MCF 10A (cell line): ENCODE measurements at regions of chr6 and their contacts with region 1.

Region 1: DNA sequence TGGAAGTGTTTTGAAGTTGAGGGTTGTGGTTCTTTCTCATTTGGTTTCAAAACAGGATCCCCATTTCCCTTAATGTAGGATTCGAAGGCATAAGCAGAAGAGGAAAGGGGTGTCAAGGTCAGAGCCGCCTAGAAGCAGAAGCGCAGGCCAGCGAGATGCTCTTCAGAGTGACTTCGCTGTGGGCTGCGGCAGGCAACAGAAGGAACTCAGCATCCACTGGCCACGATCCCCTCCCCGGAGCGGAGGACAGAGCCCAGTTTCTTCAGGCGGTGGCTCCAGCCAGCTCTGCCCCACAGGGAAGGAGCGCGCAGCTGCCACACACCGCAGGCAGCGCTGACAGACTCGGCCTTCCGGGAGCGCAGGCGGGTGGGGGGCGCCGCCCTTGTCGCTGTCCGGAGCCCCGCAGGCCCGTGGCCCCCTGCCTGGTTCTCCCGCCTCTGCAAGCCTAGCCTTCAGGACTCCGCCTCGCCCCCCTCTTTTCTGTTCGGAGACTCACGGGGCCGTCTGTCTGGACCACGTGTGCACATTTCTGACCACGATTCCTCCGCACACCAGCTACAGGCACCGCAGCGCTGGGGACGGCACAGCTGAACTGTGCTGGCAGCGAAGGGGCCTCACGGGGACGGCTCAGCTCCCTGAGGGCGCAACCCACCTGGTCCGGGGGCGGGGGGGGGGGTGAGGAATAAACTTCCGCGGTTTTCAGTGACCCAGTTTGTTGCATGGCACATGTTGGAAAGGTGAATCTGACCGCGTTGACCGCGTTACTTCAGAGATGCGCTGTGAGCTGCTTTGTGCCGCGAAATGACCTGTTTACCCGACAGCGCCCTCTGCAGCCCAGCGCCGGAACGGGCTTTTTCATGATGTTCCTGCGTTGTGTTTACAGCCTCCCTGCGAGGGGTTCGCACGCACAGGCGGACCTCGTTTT is 26.1 kb downstream of the TTLL2 start:
- DNase-seq: peak; percentile 36
- H3K4me3 Mint-ChIP-seq: peak overlapping the region; percentile 14
- H3K27ac Mint-ChIP-seq: no peak overlapping the region
- H3K4me1 Mint-ChIP-seq: no peaks in the 10 kb centered on the region
- H3K27me3 Mint-ChIP-seq: peaks cover 60% of the 10 kb centered on the region
- CTCF ChIP-seq: peak; percentile 58

Region 2: GRCh38 chr6:167141667-167142432 is 209.1 kb before region 1 on chr6:
- CTCF ChIA-PET with region 1: no interaction called
- POLR2A ChIA-PET with region 1: no interaction called
- intact Hi-C with region 1: no loop called
- DNase-seq: peak; percentile 49
- H3K4me3 Mint-ChIP-seq: no peak overlapping the region
- H3K27ac Mint-ChIP-seq: no peak overlapping the region
- H3K4me1 Mint-ChIP-seq: no peaks in the 10 kb centered on the region
- H3K27me3 Mint-ChIP-seq: peaks cover 66% of the 10 kb centered on the region
- CTCF ChIP-seq: peak; percentile 67

Region 3: DNA sequence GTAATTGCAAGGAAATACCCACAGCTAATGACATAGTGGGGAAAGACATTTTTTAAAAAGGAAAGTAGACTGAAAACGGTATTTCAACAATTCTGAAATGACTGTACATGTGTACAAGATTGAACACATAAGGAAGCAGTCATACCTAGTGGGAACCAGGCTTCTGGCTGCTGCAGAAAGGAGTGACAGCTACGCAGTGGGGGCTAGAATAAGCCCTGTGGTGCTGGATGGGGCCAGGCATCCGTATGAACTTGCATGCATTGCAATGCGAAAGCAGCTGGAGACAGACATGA is 138.3 kb before region 1 on chr6:
- CTCF ChIA-PET with region 1: interaction called, 4 read pairs
- POLR2A ChIA-PET with region 1: no interaction called
- intact Hi-C with region 1: loop called (anchors 10 kb)
- DNase-seq: no peak
- H3K4me3 Mint-ChIP-seq: no peak overlapping the region
- H3K27ac Mint-ChIP-seq: no peak overlapping the region
- H3K4me1 Mint-ChIP-seq: no peaks in the 10 kb centered on the region
- H3K27me3 Mint-ChIP-seq: peaks cover 53% of the 10 kb centered on the region
- CTCF ChIP-seq: no peak